ENCODE measurements at regions of chr18 and their contacts with region 1.

Region 1: GRCh38 chr18:6056146-6056932 is 161.0 kb upstream of the TMEM200C start:
- DNase-seq: no peak
- H3K4me3 ChIP-seq: no peak overlapping the region
- H3K4me3 Mint-ChIP-seq: no peak overlapping the region
- H3K27ac Mint-ChIP-seq: no peak overlapping the region
- H3K4me1 ChIP-seq: no peaks in the 10 kb centered on the region
- H3K4me1 Mint-ChIP-seq: no peaks in the 10 kb centered on the region
- H3K27me3 ChIP-seq: no peaks in the 10 kb centered on the region
- H3K27me3 Mint-ChIP-seq: peaks cover 3% of the 10 kb centered on the region
- CTCF ChIP-seq: no peak

Region 2: GRCh38 chr18:6078877-6079276 is 22.5 kb after region 1 on chr18:
- CTCF ChIA-PET with region 1: no interaction called
- POLR2A ChIA-PET with region 1: no interaction called
- intact Hi-C with region 1: loop called (anchors 1 kb)
- DNase-seq: no peak
- H3K4me3 ChIP-seq: no peak overlapping the region
- H3K4me3 Mint-ChIP-seq: no peak overlapping the region
- H3K27ac Mint-ChIP-seq: no peak overlapping the region
- H3K4me1 ChIP-seq: no peaks in the 10 kb centered on the region
- H3K4me1 Mint-ChIP-seq: no peaks in the 10 kb centered on the region
- H3K27me3 ChIP-seq: no peaks in the 10 kb centered on the region
- H3K27me3 Mint-ChIP-seq: peaks cover 6% of the 10 kb centered on the region
- CTCF ChIP-seq: no peak

Region 3: DNA sequence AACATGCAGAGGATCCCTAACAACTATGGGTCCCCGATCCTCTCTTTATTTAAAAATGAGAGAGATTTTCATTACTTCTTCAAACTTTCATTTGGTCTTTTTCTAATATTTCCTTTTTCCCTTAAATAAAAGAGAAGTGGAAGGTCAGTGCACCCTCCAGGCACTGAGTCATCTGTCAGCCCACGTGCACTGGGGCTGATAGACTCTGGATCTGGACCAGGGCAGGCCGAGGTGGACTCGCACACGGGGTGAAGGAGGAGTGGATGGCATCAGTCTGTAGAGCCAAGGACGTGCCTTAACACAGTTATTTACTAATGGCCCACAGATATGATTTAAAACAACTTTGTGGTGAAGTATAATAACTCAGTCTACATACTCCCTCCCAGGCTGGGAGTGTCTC is 53.4 kb after region 1 on chr18:
- CTCF ChIA-PET with region 1: no interaction called
- POLR2A ChIA-PET with region 1: no interaction called
- intact Hi-C with region 1: loop called (anchors 10 kb)
- DNase-seq: no peak
- H3K4me3 ChIP-seq: no peak overlapping the region
- H3K4me3 Mint-ChIP-seq: no peak overlapping the region
- H3K27ac Mint-ChIP-seq: no peak overlapping the region
- H3K4me1 ChIP-seq: no peaks in the 10 kb centered on the region
- H3K4me1 Mint-ChIP-seq: no peaks in the 10 kb centered on the region
- H3K27me3 ChIP-seq: no peaks in the 10 kb centered on the region
- H3K27me3 Mint-ChIP-seq: peaks cover 12% of the 10 kb centered on the region
- CTCF ChIP-seq: no peak

Measured in Caco-2 (cell line).